ENCODE measurements at regions of chr11 and their contacts with region 1.

Region 1: DNA sequence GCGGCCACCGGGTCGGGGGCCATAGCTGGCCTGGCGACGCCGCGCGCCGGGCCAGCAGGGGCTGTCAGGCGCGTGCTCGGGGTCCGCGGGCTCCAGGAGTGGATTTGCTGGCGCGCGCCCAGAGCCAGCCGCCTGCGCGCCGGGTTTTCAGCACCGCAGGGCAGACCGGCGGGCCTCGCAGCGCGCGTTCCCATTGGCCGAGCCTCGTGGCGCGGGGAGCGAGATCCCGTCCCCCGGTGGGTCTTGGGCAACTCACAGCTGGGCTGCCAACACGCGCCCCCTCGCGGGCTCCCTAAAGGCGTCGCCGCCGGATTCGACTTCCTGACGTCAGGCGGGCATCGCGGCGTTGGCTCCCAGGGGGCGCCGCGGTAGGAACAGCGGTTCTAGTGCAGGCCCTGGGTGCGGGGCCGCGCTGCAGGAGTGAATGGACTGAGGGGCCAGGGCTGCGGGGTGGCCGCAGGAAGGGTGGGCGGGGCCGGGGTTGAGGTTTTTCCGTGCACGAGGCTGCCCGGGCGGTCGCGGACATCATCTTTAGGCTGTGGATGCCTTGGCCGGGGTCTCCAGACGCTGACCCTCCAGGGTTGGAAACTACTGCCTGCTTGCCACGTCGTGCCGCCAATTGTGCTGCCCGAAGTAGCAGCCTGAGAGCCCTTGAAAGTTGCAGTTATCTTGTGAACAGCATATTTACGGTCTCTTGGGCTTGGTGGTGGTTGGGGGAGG is at the start of gene FADS1:
- DNase-seq: peak; percentile 83
- H3K4me3 Mint-ChIP-seq: peak within 1 kb of the TSS; percentile 95
- H3K27ac Mint-ChIP-seq: peak within 1 kb of the TSS; percentile 97
- H3K4me1 Mint-ChIP-seq: peaks cover 22% of the 10 kb centered on the region
- H3K27me3 Mint-ChIP-seq: no peaks in the 10 kb centered on the region
- total RNA-seq, gene FADS1: 92.3 and 97.7 TPM in 2 replicates

Region 2: GRCh38 chr11:60978546-60979380 is 838.1 kb before region 1 on chr11:
- intact Hi-C with region 1: loop called (anchors 5 kb)
- DNase-seq: peak; percentile 54
- H3K4me3 Mint-ChIP-seq: peak overlapping the region; percentile 86
- H3K27ac Mint-ChIP-seq: peak overlapping the region; percentile 92
- H3K4me1 Mint-ChIP-seq: peaks cover 87% of the 10 kb centered on the region
- H3K27me3 Mint-ChIP-seq: no peaks in the 10 kb centered on the region

Region 3: DNA sequence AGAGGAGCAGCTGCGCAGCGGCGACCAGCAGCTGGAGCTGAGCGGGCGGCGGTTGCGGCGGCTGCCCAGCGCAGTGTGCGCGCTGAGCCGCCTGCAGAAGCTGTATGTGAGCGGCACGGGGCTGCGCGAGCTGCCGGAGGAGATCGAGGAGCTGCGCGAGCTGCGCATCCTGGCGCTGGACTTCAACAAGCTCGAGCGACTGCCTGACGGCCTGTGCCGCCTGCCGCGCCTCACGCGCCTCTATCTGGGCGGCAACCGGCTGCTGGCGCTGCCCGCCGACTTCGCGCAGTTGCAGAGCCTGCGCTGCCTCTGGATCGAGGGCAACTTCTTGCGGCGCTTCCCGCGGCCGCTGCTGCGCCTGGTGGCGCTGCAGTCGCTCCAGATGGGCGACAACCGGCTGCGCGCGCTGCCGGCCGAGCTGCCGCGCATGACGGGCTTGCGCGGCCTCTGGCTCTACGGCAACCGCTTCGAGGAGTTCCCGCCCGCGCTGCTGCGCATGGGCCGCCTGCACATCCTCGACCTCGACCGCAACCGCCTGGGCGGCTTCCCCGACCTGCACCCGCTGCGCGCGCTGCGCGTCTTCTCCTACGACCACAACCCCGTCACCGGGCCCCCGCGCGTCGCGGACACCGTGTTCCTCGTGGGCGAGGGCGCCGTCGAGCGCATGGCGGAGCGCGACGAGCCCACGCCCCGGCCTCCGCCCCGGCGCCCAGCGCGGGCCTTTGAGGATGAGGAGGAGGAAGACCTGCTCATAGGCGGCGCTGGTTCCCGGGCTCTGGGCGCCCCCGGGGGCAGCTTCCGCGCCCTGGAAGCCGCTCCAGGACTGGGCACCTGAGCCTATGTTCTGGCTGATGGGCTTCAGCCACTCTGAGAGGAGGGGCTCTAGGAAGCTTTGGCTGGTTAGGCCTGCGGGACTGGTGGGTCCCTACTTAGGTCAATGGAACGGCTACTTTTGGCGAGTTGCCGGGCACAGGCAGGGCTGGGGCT is 307.6 kb before region 1 on chr11:
- intact Hi-C with region 1: loop called (anchors 5 kb)
- DNase-seq: peak; percentile 70
- H3K4me3 Mint-ChIP-seq: peak overlapping the region; percentile 19
- H3K27ac Mint-ChIP-seq: no peak overlapping the region
- H3K4me1 Mint-ChIP-seq: peaks cover 6% of the 10 kb centered on the region
- H3K27me3 Mint-ChIP-seq: peaks cover 41% of the 10 kb centered on the region

Region 4: GRCh38 chr11:61827571-61828378 is 10.9 kb after region 1 on chr11 and contains the start of gene FADS2:
- intact Hi-C with region 1: loop called (anchors 1 kb)
- DNase-seq: peak; percentile 91
- H3K4me3 Mint-ChIP-seq: peak within 1 kb of the TSS; percentile 93
- H3K27ac Mint-ChIP-seq: peak within 1 kb of the TSS; percentile 96
- H3K4me1 Mint-ChIP-seq: peaks cover 50% of the 10 kb centered on the region
- H3K27me3 Mint-ChIP-seq: no peaks in the 10 kb centered on the region
- total RNA-seq, gene FADS2: 250 and 256 TPM in 2 replicates

Region 5: GRCh38 chr11:61834278-61835048 is 17.6 kb after region 1 on chr11:
- intact Hi-C with region 1: loop called (anchors 1 kb)
- DNase-seq: peak; percentile 72
- H3K4me3 Mint-ChIP-seq: peak overlapping the region; percentile 73
- H3K27ac Mint-ChIP-seq: peak overlapping the region; percentile 96
- H3K4me1 Mint-ChIP-seq: peaks cover 76% of the 10 kb centered on the region
- H3K27me3 Mint-ChIP-seq: no peaks in the 10 kb centered on the region